ENCODE measurements at regions of chr2 and their contacts with region 1.

Region 1: GRCh38 chr2:128736689-128737545 is 418.2 kb upstream of the HS6ST1 start:
- DNase-seq: peak in 29 of 35 experiments; percentile 10 to 62 (median 33)
- ATAC-seq: peak; percentile 19 to 32 (median 29)
- H3K4me3 ChIP-seq: peak overlapping the region in 1 of 2 donors; percentile 65
- H3K4me3 Mint-ChIP-seq: peak overlapping the region in 1 of 3 donors; percentile 62
- H3K27ac ChIP-seq: no peak overlapping the region
- H3K27ac Mint-ChIP-seq: no peak overlapping the region
- H3K4me1 ChIP-seq: peaks cover 3 to 19% of the 10 kb centered on the region in 2 experiments
- H3K4me1 Mint-ChIP-seq: peaks cover 5 to 9% (median 5%) of the 10 kb centered on the region in 3 donors
- H3K27me3 ChIP-seq: peaks cover 0 to 35% of the 10 kb centered on the region in 2 experiments
- H3K27me3 Mint-ChIP-seq: peaks cover 21 to 25% of the 10 kb centered on the region in 2 donors

Region 2: GRCh38 chr2:128041561-128041960 is 695.4 kb before region 1 on chr2:
- CTCF ChIA-PET with region 1: interaction called in 1 of 2 experiments, 10 read pairs
- POLR2A ChIA-PET with region 1: no interaction called
- DNase-seq: no peak
- ATAC-seq: no peak
- H3K4me3 ChIP-seq: no peak overlapping the region
- H3K4me3 Mint-ChIP-seq: no peak overlapping the region
- H3K27ac ChIP-seq: no peak overlapping the region
- H3K27ac Mint-ChIP-seq: no peak overlapping the region
- H3K4me1 ChIP-seq: no peaks in the 10 kb centered on the region
- H3K4me1 Mint-ChIP-seq: no peaks in the 10 kb centered on the region
- H3K27me3 ChIP-seq: peaks cover 0 to 9% of the 10 kb centered on the region in 2 experiments
- H3K27me3 Mint-ChIP-seq: peaks cover 25 to 29% of the 10 kb centered on the region in 2 donors

Region 3: DNA sequence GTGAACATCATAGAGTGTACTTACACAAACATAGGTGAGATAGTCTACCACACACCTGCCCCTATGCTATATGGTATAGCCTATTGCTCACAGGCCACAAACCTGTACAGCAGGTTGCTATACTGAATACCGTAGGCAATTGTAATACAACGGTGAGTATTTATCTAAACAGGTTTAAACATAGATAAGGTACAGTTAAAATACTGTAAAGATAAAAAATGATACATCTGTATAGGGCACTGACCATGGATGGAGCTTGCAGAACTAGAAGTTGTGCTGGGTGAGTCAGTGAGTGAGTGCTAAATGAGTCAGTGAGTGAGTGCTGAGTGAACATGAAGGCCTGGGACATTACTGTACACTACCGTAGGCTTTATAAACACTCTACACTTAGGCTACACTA is 151.2 kb before region 1 on chr2:
- CTCF ChIA-PET with region 1: no interaction called
- POLR2A ChIA-PET with region 1: no interaction called
- DNase-seq: no peak
- ATAC-seq: no peak
- H3K4me3 ChIP-seq: no peak overlapping the region
- H3K4me3 Mint-ChIP-seq: no peak overlapping the region
- H3K27ac ChIP-seq: no peak overlapping the region
- H3K27ac Mint-ChIP-seq: no peak overlapping the region
- H3K4me1 ChIP-seq: no peaks in the 10 kb centered on the region
- H3K4me1 Mint-ChIP-seq: no peaks in the 10 kb centered on the region
- H3K27me3 ChIP-seq: peaks cover 0 to 2% of the 10 kb centered on the region in 2 experiments
- H3K27me3 Mint-ChIP-seq: peaks cover 0 to 10% of the 10 kb centered on the region in 2 donors